Activated B cell treated with CpG ODN at 0.5 μM for 24 hours (primary cell): ENCODE measurements at regions of chr14 and their contacts with region 1.

Region 1: DNA sequence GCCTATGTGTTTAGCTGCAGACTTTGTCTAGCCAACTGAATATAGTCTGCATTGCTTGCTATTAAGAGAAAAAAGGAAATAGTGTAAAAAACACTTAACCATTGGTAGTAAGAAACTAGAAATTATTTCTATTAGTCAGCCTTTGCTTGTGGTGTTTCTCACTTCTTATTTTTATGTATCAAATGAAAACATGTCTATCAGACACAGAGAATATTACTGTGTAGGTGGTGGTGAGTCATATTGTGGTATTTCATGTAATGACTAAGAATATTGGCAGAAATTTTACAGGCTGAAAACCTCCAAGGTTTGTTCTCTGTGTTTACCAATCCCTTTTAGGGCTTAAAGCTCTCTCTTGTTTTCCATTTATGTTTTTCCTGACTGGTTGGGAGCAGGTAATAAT is 87.2 kb downstream of the DAAM1 start:
- DNase-seq: no peak
- ATAC-seq: peak; percentile 87
- H3K4me3 Mint-ChIP-seq: peak overlapping the region; percentile 36
- H3K27ac Mint-ChIP-seq: peak overlapping the region; percentile 80
- H3K4me1 Mint-ChIP-seq: peaks cover 27% of the 10 kb centered on the region
- H3K27me3 Mint-ChIP-seq: no peaks in the 10 kb centered on the region
- CTCF ChIP-seq: no peak

Region 2: DNA sequence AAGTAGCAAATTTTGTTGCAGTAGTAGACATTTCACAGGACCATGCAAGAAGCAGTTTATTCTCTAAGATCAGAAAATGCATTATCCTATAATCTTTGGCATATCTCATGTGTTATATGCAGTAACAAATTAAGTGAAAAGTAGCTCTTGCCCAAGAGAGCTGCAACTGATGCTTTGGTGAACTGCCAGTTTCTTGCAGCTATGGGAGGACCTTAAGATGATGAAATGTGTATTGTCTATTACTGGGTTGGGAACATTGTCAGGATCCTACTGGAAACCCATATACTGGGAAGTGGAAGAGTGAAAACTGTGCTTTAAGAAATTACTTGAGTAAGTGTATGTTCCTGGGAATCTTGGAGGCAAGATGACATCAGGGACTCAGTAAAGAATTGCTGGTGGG is 399.0 kb before region 1 on chr14:
- CTCF ChIA-PET with region 1: no interaction called
- POLR2A ChIA-PET with region 1: no interaction called
- intact Hi-C with region 1: no loop called
- DNase-seq: no peak
- ATAC-seq: no peak
- H3K4me3 Mint-ChIP-seq: no peak overlapping the region
- H3K27ac Mint-ChIP-seq: no peak overlapping the region
- H3K4me1 Mint-ChIP-seq: no peaks in the 10 kb centered on the region
- H3K27me3 Mint-ChIP-seq: no peaks in the 10 kb centered on the region
- CTCF ChIP-seq: no peak

Region 3: DNA sequence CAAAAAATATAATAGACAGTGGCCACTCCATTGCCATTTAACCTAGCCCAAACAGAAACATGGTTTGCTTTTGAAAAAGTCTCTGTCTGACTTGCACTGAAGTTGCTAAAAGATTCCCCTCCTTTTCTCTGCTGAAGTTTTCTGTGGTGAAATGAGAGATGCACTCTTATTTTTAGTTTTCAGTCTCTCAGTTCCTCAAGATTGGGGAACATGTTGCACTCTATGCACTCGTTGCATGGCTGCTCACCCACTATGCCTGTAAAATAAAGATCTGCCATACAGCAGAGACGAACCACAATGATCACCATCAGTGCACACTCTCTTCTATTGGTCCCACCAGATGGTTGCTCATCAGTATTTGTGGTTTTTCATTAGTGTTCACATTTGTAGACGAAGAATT is 100.2 kb before region 1 on chr14:
- CTCF ChIA-PET with region 1: no interaction called
- POLR2A ChIA-PET with region 1: no interaction called
- intact Hi-C with region 1: loop called (anchors 1 kb)
- DNase-seq: no peak
- ATAC-seq: peak; percentile 99
- H3K4me3 Mint-ChIP-seq: peak overlapping the region; percentile 42
- H3K27ac Mint-ChIP-seq: peak overlapping the region; percentile 24
- H3K4me1 Mint-ChIP-seq: peaks cover 13% of the 10 kb centered on the region
- H3K27me3 Mint-ChIP-seq: peaks cover 5% of the 10 kb centered on the region
- CTCF ChIP-seq: no peak

Region 4: DNA sequence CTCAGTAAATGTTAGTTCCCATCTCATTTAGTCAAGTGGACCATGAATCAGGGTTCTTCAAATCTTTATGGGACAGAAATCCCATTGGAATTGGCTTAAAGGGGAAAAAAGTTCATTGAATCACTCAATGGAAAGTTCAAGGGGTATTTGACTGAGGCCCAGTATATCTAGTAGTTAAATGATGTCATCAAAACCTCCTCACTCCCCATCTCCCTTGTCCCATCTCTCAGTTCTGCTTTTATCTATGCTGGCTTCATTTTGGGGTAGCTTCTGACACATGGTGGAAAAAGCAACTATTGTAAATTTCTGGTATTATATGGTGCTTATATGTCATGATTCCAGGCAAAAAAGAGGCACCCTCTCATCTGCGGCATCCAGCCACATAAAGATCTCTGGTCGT is 35.3 kb before region 1 on chr14:
- CTCF ChIA-PET with region 1: no interaction called
- POLR2A ChIA-PET with region 1: no interaction called
- intact Hi-C with region 1: loop called (anchors 5 kb)
- DNase-seq: no peak
- ATAC-seq: peak; percentile 69
- H3K4me3 Mint-ChIP-seq: no peak overlapping the region
- H3K27ac Mint-ChIP-seq: no peak overlapping the region
- H3K4me1 Mint-ChIP-seq: peaks cover 35% of the 10 kb centered on the region
- H3K27me3 Mint-ChIP-seq: no peaks in the 10 kb centered on the region
- CTCF ChIP-seq: no peak

Region 5: GRCh38 chr14:59254146-59254941 is 21.3 kb before region 1 on chr14:
- CTCF ChIA-PET with region 1: no interaction called
- POLR2A ChIA-PET with region 1: no interaction called
- intact Hi-C with region 1: loop called (anchors 2 kb)
- DNase-seq: no peak
- ATAC-seq: no peak
- H3K4me3 Mint-ChIP-seq: no peak overlapping the region
- H3K27ac Mint-ChIP-seq: no peak overlapping the region
- H3K4me1 Mint-ChIP-seq: peaks cover 34% of the 10 kb centered on the region
- H3K27me3 Mint-ChIP-seq: no peaks in the 10 kb centered on the region
- CTCF ChIP-seq: no peak

Region 6: GRCh38 chr14:59301354-59301753 is 25.7 kb after region 1 on chr14:
- CTCF ChIA-PET with region 1: no interaction called
- POLR2A ChIA-PET with region 1: no interaction called
- intact Hi-C with region 1: loop called (anchors 2 kb)
- DNase-seq: no peak
- ATAC-seq: peak; percentile 85
- H3K4me3 Mint-ChIP-seq: peak overlapping the region; percentile 45
- H3K27ac Mint-ChIP-seq: peak overlapping the region; percentile 62
- H3K4me1 Mint-ChIP-seq: peaks cover 64% of the 10 kb centered on the region
- H3K27me3 Mint-ChIP-seq: no peaks in the 10 kb centered on the region
- CTCF ChIP-seq: no peak

Region 7: DNA sequence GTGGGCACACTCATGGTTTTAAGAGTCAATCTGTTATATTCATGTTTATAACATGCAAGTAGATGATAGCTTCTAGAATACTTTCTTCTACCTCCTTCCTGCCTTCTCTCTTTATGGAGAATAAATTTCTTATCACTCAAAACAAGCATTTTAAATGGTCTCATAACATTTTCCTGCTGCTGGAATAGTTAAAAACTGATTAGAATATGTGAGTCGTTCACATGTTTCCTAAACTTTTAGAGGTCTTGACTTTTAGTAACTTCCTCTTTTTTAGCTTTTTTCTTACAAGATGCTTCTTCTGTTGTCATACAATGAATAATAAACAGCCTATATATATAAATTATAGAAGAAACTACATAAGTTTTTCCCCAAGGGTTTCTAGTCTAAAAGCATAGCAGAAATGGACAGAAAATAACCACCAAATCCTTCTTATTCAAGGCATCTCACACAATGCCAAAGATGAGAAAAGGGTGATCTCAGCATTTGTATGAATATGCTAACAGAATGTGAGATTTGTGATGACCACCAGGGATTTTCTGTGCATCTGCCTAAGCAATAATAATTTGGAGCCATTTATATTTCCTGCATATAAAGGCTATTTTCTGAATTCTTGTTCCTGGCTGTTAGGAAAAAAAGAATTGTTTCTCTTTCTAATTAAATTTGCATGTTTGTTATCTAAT is 40.6 kb after region 1 on chr14:
- CTCF ChIA-PET with region 1: no interaction called
- POLR2A ChIA-PET with region 1: no interaction called
- intact Hi-C with region 1: loop called (anchors 5 kb)
- DNase-seq: no peak
- ATAC-seq: no peak
- H3K4me3 Mint-ChIP-seq: no peak overlapping the region
- H3K27ac Mint-ChIP-seq: no peak overlapping the region
- H3K4me1 Mint-ChIP-seq: peaks cover 44% of the 10 kb centered on the region
- H3K27me3 Mint-ChIP-seq: no peaks in the 10 kb centered on the region
- CTCF ChIP-seq: no peak